CD4-positive, alpha-beta T cell (primary cell): ENCODE measurements at regions of chr5 and their contacts with region 1.

Region 1: GRCh38 chr5:157142317-157143126 is at the start of gene MED7:
- DNase-seq: peak; percentile 77 to 99 (median 88)
- ATAC-seq: peak; percentile 95
- H3K4me3 ChIP-seq: peak within 1 kb of the TSS; percentile 98
- H3K4me3 Mint-ChIP-seq: peak within 1 kb of the TSS; percentile 95
- H3K27ac ChIP-seq: peak within 1 kb of the TSS; percentile 88 to 94
- H3K27ac Mint-ChIP-seq: peak within 1 kb of the TSS; percentile 98
- H3K4me1 ChIP-seq: peaks cover 35% of the 10 kb centered on the region
- H3K4me1 Mint-ChIP-seq: peaks cover 57% of the 10 kb centered on the region
- H3K27me3 ChIP-seq: no peaks in the 10 kb centered on the region
- H3K27me3 Mint-ChIP-seq: no peaks in the 10 kb centered on the region
- CTCF ChIP-seq: no peak
- total RNA-seq, gene MED7: 7.0 to 8.7 TPM

Region 2: GRCh38 chr5:157172403-157172802 is 29.9 kb after region 1 on chr5:
- CTCF ChIA-PET with region 1: interaction called, 3 read pairs
- POLR2A ChIA-PET with region 1: interaction called, 12 read pairs
- intact Hi-C with region 1: no loop called
- DNase-seq: peak in 13 of 14 experiments; percentile 39 to 94 (median 58)
- ATAC-seq: peak; percentile 97
- H3K4me3 ChIP-seq: peak overlapping the region; percentile 27
- H3K4me3 Mint-ChIP-seq: peak overlapping the region; percentile 58
- H3K27ac ChIP-seq: peak overlapping the region; percentile 77 to 83
- H3K27ac Mint-ChIP-seq: peak overlapping the region; percentile 85
- H3K4me1 ChIP-seq: peaks cover 59% of the 10 kb centered on the region
- H3K4me1 Mint-ChIP-seq: peaks cover 76% of the 10 kb centered on the region
- H3K27me3 ChIP-seq: no peaks in the 10 kb centered on the region
- H3K27me3 Mint-ChIP-seq: no peaks in the 10 kb centered on the region
- CTCF ChIP-seq: no peak

Region 3: GRCh38 chr5:157204765-157205164 is 62.2 kb after region 1 on chr5:
- CTCF ChIA-PET with region 1: interaction called, 5 read pairs
- POLR2A ChIA-PET with region 1: interaction called, 38 read pairs
- intact Hi-C with region 1: no loop called
- DNase-seq: peak in 4 of 14 experiments; percentile 46 to 80 (median 77)
- ATAC-seq: peak; percentile 56
- H3K4me3 ChIP-seq: no peak overlapping the region
- H3K4me3 Mint-ChIP-seq: peak overlapping the region; percentile 72
- H3K27ac ChIP-seq: peak overlapping the region; percentile 73 to 83
- H3K27ac Mint-ChIP-seq: peak overlapping the region; percentile 96
- H3K4me1 ChIP-seq: peaks cover 86% of the 10 kb centered on the region
- H3K4me1 Mint-ChIP-seq: peaks cover 92% of the 10 kb centered on the region
- H3K27me3 ChIP-seq: no peaks in the 10 kb centered on the region
- H3K27me3 Mint-ChIP-seq: no peaks in the 10 kb centered on the region
- CTCF ChIP-seq: no peak

Region 4: DNA sequence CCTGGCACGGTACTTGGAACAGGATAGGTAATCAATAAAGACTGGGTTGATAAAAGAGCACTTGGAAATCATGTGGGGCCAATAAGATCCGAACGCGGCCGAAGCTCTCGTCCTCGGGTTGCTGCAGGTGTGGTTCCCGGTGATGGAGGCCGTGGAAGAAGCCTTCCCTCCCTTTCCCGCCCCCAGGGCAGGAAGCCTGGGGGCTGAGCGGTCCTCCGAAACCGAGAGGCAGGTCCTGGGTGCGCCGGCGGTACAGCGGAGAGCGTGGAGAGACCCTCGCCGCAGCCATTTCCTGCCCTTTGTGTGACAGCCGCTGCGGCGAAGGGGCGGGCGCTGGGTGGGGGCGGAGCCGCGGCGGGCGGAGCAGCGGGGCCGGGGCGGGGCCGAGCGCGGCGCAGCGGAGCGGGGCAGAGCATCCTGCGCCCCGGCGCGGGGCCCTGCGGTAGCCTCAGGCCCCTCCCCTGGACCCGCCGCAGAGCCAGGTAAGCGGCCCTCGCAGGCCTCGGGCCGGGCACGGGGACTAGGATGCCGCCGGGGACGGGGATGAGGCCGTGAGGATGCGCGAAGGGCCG is 123.3 kb after region 1 on chr5 and contains the start of gene CYFIP2:
- CTCF ChIA-PET with region 1: interaction called, 3 read pairs
- POLR2A ChIA-PET with region 1: interaction called, 29 read pairs
- intact Hi-C with region 1: no loop called
- DNase-seq: peak; percentile 75 to 94 (median 84)
- ATAC-seq: peak; percentile 84
- H3K4me3 ChIP-seq: peak within 1 kb of the TSS; percentile 79
- H3K4me3 Mint-ChIP-seq: peak within 1 kb of the TSS; percentile 99
- H3K27ac ChIP-seq: peak within 1 kb of the TSS; percentile 77 to 94
- H3K27ac Mint-ChIP-seq: peak within 1 kb of the TSS; percentile 97
- H3K4me1 ChIP-seq: peaks cover 63% of the 10 kb centered on the region
- H3K4me1 Mint-ChIP-seq: peaks cover 81% of the 10 kb centered on the region
- H3K27me3 ChIP-seq: no peaks in the 10 kb centered on the region
- H3K27me3 Mint-ChIP-seq: no peaks in the 10 kb centered on the region
- CTCF ChIP-seq: no peak
- total RNA-seq, gene CYFIP2: 271 to 287 TPM

Region 5: DNA sequence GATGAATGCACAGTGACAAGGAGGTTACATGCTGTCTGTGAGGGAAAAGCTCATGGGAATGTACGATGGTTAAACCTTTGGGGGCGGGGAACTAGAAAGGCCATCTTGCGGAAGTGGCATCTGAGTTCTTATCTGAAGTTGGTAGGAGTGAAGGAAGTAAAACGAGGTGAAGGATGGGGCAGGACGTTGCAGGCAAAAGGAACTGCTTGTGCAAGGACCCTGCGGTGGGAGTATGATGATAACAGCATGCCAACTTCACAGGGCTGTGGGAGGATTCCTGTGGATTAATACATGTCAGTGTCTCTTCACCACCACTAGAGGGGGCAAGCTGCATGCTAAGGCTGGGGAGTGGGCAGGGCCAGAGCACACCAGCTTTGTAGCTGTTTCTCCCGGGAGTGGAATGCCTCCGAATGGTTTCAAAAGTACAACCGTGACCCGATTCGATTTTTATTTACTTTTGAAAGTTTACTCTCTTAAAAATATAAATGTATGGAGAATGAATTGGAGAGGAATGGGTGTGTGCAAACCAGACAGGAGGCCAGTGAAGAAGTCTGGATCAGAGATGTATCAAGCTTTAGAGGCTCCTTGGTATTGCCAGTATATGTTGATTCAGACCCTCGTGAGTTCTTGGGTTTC is 185.9 kb after region 1 on chr5:
- CTCF ChIA-PET with region 1: interaction called, 13 read pairs
- POLR2A ChIA-PET with region 1: interaction called, 13 read pairs
- intact Hi-C with region 1: no loop called
- DNase-seq: peak in 13 of 14 experiments; percentile 28 to 86 (median 45)
- ATAC-seq: peak; percentile 88
- H3K4me3 ChIP-seq: no peak overlapping the region
- H3K4me3 Mint-ChIP-seq: peak overlapping the region; percentile 70
- H3K27ac ChIP-seq: peak overlapping the region; percentile 12 to 71
- H3K27ac Mint-ChIP-seq: peak overlapping the region; percentile 89
- H3K4me1 ChIP-seq: peaks cover 32% of the 10 kb centered on the region
- H3K4me1 Mint-ChIP-seq: peaks cover 41% of the 10 kb centered on the region
- H3K27me3 ChIP-seq: no peaks in the 10 kb centered on the region
- H3K27me3 Mint-ChIP-seq: no peaks in the 10 kb centered on the region
- CTCF ChIP-seq: peak; percentile 89